ENCODE measurements at regions of chr17 and their contacts with region 1.

Region 1: GRCh38 chr17:60641810-60642220 is 35.8 kb upstream of the BCAS3 start:
- DNase-seq: peak; percentile 85
- ATAC-seq: peak; percentile 82
- H3K4me3 ChIP-seq: no peak overlapping the region
- H3K27ac ChIP-seq: no peak overlapping the region
- H3K4me1 ChIP-seq: peaks cover 2% of the 10 kb centered on the region; the same call in 1 of the 2 replicates
- H3K27me3 ChIP-seq: no peaks in the 10 kb centered on the region
- CTCF ChIP-seq: peak; percentile 52
- POLR2A ChIP-seq: no peak
- RAD21 ChIP-seq: peak; percentile 63

Region 2: GRCh38 chr17:60135151-60135950 is 506.5 kb before region 1 on chr17:
- CTCF ChIA-PET with region 1: no interaction called
- POLR2A ChIA-PET with region 1: no interaction called
- dilution Hi-C with region 1: no loop called
- in situ Hi-C with region 1: loop called (anchors 25 kb)
- intact Hi-C with region 1: loop called (anchors 10 kb)
- DNase-seq: peak; percentile 90
- ATAC-seq: peak; percentile 97
- H3K4me3 ChIP-seq: peak overlapping the region; percentile 59
- H3K27ac ChIP-seq: peak overlapping the region; percentile 25
- H3K4me1 ChIP-seq: no peaks in the 10 kb centered on the region
- H3K27me3 ChIP-seq: peaks cover 21% of the 10 kb centered on the region
- CTCF ChIP-seq: no peak
- POLR2A ChIP-seq: peak; percentile 74
- RAD21 ChIP-seq: no peak

Region 3: DNA sequence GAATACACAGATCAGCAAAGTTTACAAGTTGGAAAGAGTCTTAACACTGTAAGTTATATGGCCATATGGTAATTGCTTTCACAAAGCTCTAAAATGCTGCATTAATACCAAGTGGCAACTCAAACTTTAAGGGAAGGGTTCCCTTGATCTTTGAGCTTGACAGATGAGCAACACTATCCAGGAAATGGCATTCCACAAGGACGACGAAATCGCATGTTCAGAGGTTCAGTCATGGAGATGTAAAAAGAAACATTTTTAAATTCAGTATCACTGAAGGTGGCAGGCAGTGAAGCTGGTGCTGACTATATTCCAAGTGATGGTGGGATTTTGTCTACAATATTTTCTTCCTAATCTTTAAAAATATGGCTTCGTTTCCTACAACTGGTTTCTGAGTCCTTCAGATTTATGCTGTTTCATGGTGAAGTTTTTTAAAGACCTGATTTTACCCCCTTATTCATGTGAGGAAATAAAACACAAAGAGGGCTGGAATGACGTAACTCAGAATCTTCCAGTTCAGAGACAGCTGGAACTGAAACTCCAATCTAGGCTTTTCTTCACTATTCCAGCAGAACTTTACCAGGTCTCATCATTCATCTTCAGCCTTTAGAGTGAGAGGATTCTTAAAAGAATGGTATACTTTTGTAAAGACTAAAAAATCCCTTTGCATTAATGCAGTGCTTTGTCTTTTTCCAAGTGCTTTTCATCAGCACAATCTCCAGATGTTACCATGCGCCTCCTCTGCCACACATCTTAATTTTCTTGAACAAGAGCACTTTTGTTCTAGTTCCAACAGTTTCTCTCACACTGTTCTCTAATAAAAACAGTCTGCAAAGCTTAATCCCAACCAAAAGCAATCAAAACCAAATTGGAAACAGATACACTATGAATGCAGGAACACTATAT is 199.3 kb before region 1 on chr17:
- CTCF ChIA-PET with region 1: no interaction called
- POLR2A ChIA-PET with region 1: no interaction called
- dilution Hi-C with region 1: no loop called
- in situ Hi-C with region 1: no loop called
- intact Hi-C with region 1: loop called (anchors 5 kb)
- DNase-seq: peak; percentile 63
- ATAC-seq: peak; percentile 58
- H3K4me3 ChIP-seq: no peak overlapping the region
- H3K27ac ChIP-seq: no peak overlapping the region
- H3K4me1 ChIP-seq: no peaks in the 10 kb centered on the region; the same call in 1 of the 2 replicates
- H3K27me3 ChIP-seq: no peaks in the 10 kb centered on the region
- CTCF ChIP-seq: no peak
- POLR2A ChIP-seq: no peak
- RAD21 ChIP-seq: no peak

Region 4: GRCh38 chr17:60468371-60468770 is 173.4 kb before region 1 on chr17:
- CTCF ChIA-PET with region 1: interaction called, 3 read pairs
- POLR2A ChIA-PET with region 1: no interaction called
- dilution Hi-C with region 1: no loop called
- in situ Hi-C with region 1: no loop called
- intact Hi-C with region 1: loop called (anchors 5 kb)
- DNase-seq: peak; percentile 43
- ATAC-seq: peak; percentile 56
- H3K4me3 ChIP-seq: no peak overlapping the region
- H3K27ac ChIP-seq: peak overlapping the region; percentile 99; the same call in 1 of the 2 replicates
- H3K4me1 ChIP-seq: peaks cover 8% of the 10 kb centered on the region
- H3K27me3 ChIP-seq: no peaks in the 10 kb centered on the region
- CTCF ChIP-seq: no peak
- POLR2A ChIP-seq: no peak
- RAD21 ChIP-seq: no peak

Region 5: GRCh38 chr17:60525685-60526514 is 115.9 kb before region 1 on chr17 and contains the start of gene APPBP2:
- CTCF ChIA-PET with region 1: interaction called, 7 read pairs
- POLR2A ChIA-PET with region 1: no interaction called
- dilution Hi-C with region 1: no loop called
- in situ Hi-C with region 1: loop called (anchors 10 kb)
- intact Hi-C with region 1: loop called (anchors 5 kb)
- DNase-seq: peak; percentile 85
- ATAC-seq: peak; percentile 94
- H3K4me3 ChIP-seq: peak within 1 kb of the TSS; percentile 95
- H3K27ac ChIP-seq: peak within 1 kb of the TSS; percentile 93
- H3K4me1 ChIP-seq: peaks cover 6% of the 10 kb centered on the region; the same call in 1 of the 2 replicates
- H3K27me3 ChIP-seq: no peaks in the 10 kb centered on the region
- CTCF ChIP-seq: no peak
- POLR2A ChIP-seq: peak; percentile 94
- RAD21 ChIP-seq: no peak
- total RNA-seq, gene APPBP2: 86.7 and 93.9 TPM in 2 replicates

Region 6: GRCh38 chr17:60577147-60577915 is 64.5 kb before region 1 on chr17:
- CTCF ChIA-PET with region 1: interaction called, 3 read pairs
- POLR2A ChIA-PET with region 1: no interaction called
- dilution Hi-C with region 1: no loop called
- in situ Hi-C with region 1: no loop called
- intact Hi-C with region 1: loop called (anchors 2 kb)
- DNase-seq: peak; percentile 72
- ATAC-seq: peak; percentile 87
- H3K4me3 ChIP-seq: peak overlapping the region; percentile 34
- H3K27ac ChIP-seq: peak overlapping the region; percentile 36
- H3K4me1 ChIP-seq: peaks cover 10% of the 10 kb centered on the region
- H3K27me3 ChIP-seq: no peaks in the 10 kb centered on the region
- CTCF ChIP-seq: peak; percentile 30; the same call in 1 of the 2 replicates
- POLR2A ChIP-seq: no peak
- RAD21 ChIP-seq: peak; percentile 33; the same call in 1 of the 2 replicates

Region 7: GRCh38 chr17:60599620-60600489 is 42.0 kb before region 1 on chr17 and contains the start of gene PPM1D:
- CTCF ChIA-PET with region 1: interaction called, 3 read pairs
- POLR2A ChIA-PET with region 1: no interaction called
- dilution Hi-C with region 1: no loop called
- in situ Hi-C with region 1: no loop called
- intact Hi-C with region 1: loop called (anchors 1 kb)
- DNase-seq: peak; percentile 99
- ATAC-seq: peak; percentile 95
- H3K4me3 ChIP-seq: peak within 1 kb of the TSS; percentile 97
- H3K27ac ChIP-seq: peak within 1 kb of the TSS; percentile 93
- H3K4me1 ChIP-seq: peaks cover 2% of the 10 kb centered on the region; the same call in 1 of the 2 replicates
- H3K27me3 ChIP-seq: no peaks in the 10 kb centered on the region
- CTCF ChIP-seq: no peak
- POLR2A ChIP-seq: peak; percentile 82
- RAD21 ChIP-seq: no peak
- total RNA-seq, gene PPM1D: 15.8 and 16.1 TPM in 2 replicates

Region 8: DNA sequence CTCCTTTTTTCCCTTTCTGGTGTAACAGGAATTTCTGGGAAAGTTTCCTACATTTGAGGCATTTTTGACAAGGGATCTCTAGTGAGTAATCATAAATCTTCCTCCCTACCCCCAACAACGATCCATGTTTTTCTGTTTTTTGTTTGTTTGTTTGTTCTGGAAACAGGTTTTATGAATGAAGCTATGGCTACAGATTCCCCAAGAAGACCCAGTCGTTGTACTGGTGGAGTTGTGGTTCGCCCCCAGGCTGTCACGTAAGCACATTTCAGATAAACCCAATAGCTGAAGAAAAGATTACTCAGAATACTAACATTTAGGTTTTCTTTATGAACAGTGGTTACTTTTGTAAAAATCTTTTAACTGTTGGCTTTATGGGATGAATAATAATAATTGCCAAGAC is 37.5 kb after region 1 on chr17:
- CTCF ChIA-PET with region 1: no interaction called
- POLR2A ChIA-PET with region 1: no interaction called
- dilution Hi-C with region 1: no loop called
- in situ Hi-C with region 1: no loop called
- intact Hi-C with region 1: no loop called
- DNase-seq: no peak
- ATAC-seq: no peak
- H3K4me3 ChIP-seq: no peak overlapping the region
- H3K27ac ChIP-seq: no peak overlapping the region
- H3K4me1 ChIP-seq: peaks cover 3% of the 10 kb centered on the region; the same call in 1 of the 2 replicates
- H3K27me3 ChIP-seq: no peaks in the 10 kb centered on the region
- CTCF ChIP-seq: no peak
- POLR2A ChIP-seq: no peak
- RAD21 ChIP-seq: no peak

Region 9: GRCh38 chr17:60720763-60721531 is 79.1 kb after region 1 on chr17:
- CTCF ChIA-PET with region 1: no interaction called
- POLR2A ChIA-PET with region 1: no interaction called
- dilution Hi-C with region 1: no loop called
- in situ Hi-C with region 1: no loop called
- intact Hi-C with region 1: no loop called
- DNase-seq: peak; percentile 81
- ATAC-seq: peak; percentile 90
- H3K4me3 ChIP-seq: no peak overlapping the region
- H3K27ac ChIP-seq: no peak overlapping the region
- H3K4me1 ChIP-seq: peaks cover 3% of the 10 kb centered on the region; the same call in 1 of the 2 replicates
- H3K27me3 ChIP-seq: no peaks in the 10 kb centered on the region
- CTCF ChIP-seq: peak; percentile 86
- POLR2A ChIP-seq: peak; percentile 31; the same call in 1 of the 2 replicates
- RAD21 ChIP-seq: peak; percentile 94